MCF 10A (cell line): ENCODE measurements at regions of chr16 and their contacts with region 1.

Region 1: DNA sequence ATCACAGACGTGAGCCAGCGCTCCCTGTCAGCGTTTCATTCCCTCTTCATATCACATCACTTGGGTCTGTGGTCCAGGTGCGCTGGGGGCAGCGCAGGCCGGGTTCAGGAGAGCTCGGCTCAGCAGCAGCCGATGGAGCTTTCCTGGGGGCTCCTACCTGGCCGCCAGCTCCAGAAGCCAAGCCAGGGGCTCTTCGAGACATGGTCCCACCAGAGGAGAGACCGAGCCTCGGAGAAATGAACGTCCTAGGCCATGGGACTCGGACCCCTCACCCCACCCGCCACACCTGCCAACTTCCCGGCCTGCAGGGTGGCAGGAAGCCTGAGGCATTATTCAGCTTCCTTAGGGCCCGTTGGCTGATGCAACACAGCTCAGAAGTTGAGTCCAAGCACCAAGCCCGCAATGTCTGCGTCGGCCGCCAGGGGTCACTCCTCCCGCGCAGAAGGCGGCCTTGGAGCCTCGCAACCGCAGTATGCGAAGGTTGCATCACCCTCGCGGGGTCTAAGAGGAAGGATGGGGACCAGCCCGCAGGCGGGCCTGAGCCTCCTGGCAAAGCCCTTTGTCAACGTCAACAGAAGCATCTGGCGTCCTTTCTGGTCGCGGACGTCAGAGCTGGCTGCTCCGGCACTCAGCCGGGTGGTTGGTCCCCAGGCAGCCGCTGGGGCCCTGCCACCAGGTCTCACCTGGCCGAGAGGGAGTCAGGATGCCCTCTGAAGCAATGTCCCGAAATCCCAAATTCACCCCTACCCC is 13.2 kb upstream of the KLHDC4 start:
- DNase-seq: peak; percentile 97
- H3K4me3 Mint-ChIP-seq: peak overlapping the region; percentile 52
- H3K27ac Mint-ChIP-seq: peak overlapping the region; percentile 89
- H3K4me1 Mint-ChIP-seq: peaks cover 18% of the 10 kb centered on the region
- H3K27me3 Mint-ChIP-seq: no peaks in the 10 kb centered on the region
- CTCF ChIP-seq: peak; percentile 98

Region 2: GRCh38 chr16:87765776-87766484 is 13.1 kb before region 1 on chr16 and contains the start of gene KLHDC4:
- CTCF ChIA-PET with region 1: interaction called, 25 read pairs
- POLR2A ChIA-PET with region 1: interaction called, 13 read pairs
- intact Hi-C with region 1: no loop called
- DNase-seq: peak; percentile 84
- H3K4me3 Mint-ChIP-seq: peak within 1 kb of the TSS; percentile 88
- H3K27ac Mint-ChIP-seq: peak within 1 kb of the TSS; percentile 95
- H3K4me1 Mint-ChIP-seq: peaks cover 24% of the 10 kb centered on the region
- H3K27me3 Mint-ChIP-seq: no peaks in the 10 kb centered on the region
- CTCF ChIP-seq: no peak
- total RNA-seq, gene KLHDC4: 82.9 and 106 TPM in 2 replicates

Region 3: DNA sequence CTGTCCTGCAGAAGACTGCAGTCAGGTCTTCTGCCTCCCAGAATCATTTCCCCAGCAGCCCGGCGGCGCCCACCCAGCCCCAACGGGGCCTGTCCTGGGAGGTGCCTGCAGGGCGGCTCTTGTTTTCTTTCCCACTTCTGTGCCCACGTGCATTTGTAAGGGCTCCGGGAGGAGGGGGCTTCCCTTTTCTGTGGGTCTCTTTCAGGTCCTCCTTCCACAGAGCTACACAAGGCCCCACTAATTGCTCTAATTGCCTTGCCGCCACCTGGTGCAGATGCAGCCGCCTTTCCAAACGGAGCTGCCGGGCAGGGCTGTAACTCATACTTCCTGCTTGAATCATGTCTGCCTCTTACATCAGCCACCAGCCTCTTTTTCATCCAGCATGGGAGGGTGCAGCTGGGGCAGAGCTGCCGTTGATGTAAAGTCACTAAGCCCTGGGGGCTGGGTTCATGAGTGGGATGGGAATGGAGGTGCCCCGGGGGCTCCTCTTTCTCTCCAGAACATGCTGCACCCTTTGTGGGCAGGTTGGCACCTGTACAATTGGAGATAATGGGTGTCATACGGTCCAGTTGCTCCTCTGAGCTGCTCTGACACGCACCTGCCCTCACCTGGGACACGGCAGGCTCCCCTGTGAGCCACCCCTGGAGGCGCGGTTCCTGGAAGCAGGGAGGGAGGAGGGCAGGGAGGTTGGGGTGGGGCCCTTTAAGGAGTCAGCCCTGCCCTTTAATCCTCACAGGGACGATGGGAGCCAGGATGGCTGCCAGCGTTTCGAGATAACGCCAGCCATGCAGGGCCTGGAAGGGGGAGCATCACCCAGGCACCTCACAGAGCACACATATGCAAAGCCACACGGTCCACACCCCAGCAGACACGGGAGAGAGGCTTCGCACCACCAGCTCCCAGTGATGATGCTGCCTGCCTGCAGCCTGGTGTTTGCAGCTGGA is 27.9 kb after region 1 on chr16:
- CTCF ChIA-PET with region 1: interaction called, 50 read pairs
- POLR2A ChIA-PET with region 1: interaction called, 79 read pairs
- intact Hi-C with region 1: loop called (anchors 1 kb)
- DNase-seq: peak; percentile 99
- H3K4me3 Mint-ChIP-seq: peak overlapping the region; percentile 87
- H3K27ac Mint-ChIP-seq: peak overlapping the region; percentile 96
- H3K4me1 Mint-ChIP-seq: peaks cover 37% of the 10 kb centered on the region
- H3K27me3 Mint-ChIP-seq: no peaks in the 10 kb centered on the region
- CTCF ChIP-seq: no peak

Region 4: DNA sequence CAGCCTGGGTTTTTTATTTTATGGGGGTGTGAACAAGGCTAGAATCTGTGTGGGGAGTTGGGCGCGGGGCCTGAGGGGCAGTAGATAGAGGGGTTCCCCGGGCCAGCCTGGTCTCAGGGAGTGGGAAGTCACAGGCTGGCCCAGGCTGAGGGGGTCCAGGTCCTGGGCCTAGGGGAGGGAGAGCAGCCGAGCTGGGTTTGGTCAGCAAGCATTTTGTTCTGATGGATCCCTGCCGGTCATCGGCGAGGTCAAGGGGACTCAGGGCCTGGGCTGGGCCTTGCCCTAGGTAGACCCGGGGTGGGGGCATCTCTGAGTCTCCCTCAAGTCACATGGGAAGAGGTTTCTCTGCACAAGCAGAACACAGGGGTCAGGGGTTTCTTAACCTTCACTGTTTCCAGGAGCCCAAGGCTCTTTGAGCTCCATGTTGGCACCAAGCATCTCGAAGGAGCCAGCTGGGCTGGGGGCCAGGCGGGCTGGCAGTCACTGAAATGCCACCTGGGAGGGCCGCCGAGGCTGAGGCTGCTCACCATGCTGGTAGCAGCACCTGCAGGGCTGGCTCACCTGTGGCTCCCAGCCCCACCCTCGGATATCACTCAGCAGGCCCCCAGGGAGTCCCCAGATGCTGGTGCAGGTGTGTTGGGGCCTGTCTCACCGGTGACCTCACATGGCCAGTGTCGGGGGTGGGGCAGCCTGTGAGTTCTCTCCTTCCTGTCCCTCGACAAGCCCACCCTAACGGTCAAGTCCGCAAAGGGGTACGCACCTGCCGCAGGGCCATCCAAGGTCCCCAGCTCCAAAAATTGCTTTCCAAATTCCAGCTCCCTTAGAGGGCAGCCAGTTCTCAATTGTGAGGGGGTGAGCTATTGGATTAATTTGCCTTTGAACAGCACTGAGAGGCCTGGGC is 49.3 kb after region 1 on chr16:
- CTCF ChIA-PET with region 1: interaction called, 16 read pairs
- POLR2A ChIA-PET with region 1: interaction called, 15 read pairs
- intact Hi-C with region 1: loop called (anchors 5 kb)
- DNase-seq: peak; percentile 61
- H3K4me3 Mint-ChIP-seq: no peak overlapping the region
- H3K27ac Mint-ChIP-seq: no peak overlapping the region
- H3K4me1 Mint-ChIP-seq: peaks cover 8% of the 10 kb centered on the region
- H3K27me3 Mint-ChIP-seq: no peaks in the 10 kb centered on the region
- CTCF ChIP-seq: no peak

Region 5: DNA sequence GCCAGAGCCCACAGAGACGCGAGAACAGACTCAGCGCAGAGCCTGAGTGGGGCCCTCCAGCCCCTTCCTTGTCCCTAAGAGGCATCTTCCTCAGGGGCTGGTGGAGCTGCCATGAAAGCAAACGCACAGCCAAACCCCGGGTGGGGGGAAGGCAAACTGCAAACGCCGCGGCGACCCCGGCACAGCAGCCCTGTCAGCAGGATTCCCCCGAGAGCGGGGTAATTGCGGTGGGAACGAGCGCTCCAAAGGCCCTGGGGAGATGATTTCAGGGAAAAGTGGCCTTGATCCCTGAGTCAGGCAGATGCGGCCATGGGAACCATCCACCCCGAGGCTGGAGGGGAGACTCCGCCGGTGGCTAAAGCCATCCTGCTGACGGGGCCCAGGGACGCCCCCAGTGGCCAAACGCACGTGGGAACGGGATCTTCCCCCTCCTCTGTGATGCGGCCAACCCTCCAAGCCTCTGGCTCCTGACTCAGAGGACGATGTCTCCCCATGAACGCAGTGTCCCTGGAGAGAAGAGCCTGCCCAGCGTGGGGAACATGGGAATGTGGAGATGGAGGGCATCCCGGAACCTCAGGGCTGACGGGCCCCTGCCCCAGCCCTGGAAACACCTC is 65.2 kb after region 1 on chr16:
- CTCF ChIA-PET with region 1: interaction called, 27 read pairs
- POLR2A ChIA-PET with region 1: interaction called, 6 read pairs
- intact Hi-C with region 1: no loop called
- DNase-seq: no peak
- H3K4me3 Mint-ChIP-seq: no peak overlapping the region
- H3K27ac Mint-ChIP-seq: peak overlapping the region; percentile 57
- H3K4me1 Mint-ChIP-seq: peaks cover 14% of the 10 kb centered on the region
- H3K27me3 Mint-ChIP-seq: no peaks in the 10 kb centered on the region
- CTCF ChIP-seq: no peak

Region 6: DNA sequence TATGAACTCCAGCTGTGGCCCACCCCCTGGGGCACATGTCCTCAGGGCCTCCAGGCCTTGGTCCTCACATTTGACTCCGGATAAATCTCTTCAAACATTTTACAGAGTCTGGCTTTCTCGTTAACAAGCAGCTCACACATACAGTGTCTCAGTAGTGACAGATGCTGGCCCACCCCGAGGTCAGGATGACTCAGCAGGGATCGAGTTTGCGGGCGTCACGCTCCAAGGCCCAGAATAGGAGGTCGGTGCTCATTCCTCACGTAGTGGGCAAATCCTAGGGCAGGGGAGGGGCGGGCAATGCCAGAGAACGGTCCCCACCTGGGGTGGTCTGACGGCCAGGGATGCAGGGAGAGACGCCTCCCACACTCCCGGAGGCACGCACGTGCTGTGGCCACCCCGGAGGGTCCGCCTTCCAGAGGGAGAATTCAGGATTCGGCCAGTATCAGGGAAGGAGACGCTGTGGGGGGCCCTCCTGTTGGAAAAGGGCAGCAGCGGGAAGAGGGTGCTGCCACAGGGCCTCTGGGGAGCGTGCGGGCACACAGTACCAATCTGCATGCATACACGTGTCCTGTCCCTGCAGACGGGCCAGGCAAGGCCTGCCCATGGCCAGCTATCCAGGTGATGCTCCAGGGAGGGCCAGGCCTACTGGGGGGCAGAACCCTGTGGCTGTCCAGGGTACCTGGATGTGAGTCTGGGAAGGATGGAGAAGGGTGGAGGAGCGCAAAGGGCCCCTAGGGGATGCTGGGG is 81.7 kb after region 1 on chr16:
- CTCF ChIA-PET with region 1: interaction called, 205 read pairs
- POLR2A ChIA-PET with region 1: interaction called, 138 read pairs
- intact Hi-C with region 1: no loop called
- DNase-seq: peak; percentile 72
- H3K4me3 Mint-ChIP-seq: peak overlapping the region; percentile 67
- H3K27ac Mint-ChIP-seq: peak overlapping the region; percentile 75
- H3K4me1 Mint-ChIP-seq: peaks cover 38% of the 10 kb centered on the region
- H3K27me3 Mint-ChIP-seq: no peaks in the 10 kb centered on the region
- CTCF ChIP-seq: no peak

Region 7: DNA sequence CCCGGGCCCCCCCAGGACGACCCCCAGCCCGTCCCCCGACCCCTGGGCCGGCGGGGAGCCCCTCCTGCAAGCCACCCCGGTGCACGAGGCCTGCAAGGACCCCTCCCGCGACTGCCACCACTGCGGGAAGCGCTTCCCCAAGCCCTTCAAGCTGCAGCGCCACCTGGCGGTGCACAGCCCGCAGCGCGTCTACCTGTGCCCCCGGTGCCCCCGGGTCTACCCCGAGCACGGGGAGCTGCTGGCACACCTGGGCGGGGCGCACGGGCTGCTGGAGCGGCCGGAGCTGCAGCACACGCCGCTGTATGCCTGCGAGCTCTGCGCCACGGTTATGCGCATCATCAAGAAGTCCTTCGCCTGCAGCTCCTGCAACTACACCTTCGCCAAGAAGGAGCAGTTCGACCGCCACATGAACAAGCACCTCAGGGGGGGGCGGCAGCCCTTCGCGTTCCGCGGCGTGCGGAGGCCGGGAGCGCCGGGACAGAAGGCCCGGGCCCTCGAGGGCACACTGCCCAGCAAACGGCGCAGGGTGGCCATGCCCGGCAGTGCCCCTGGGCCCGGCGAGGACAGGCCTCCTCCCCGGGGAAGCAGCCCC is 658.5 kb after region 1 on chr16:
- CTCF ChIA-PET with region 1: interaction called, 3 read pairs
- POLR2A ChIA-PET with region 1: no interaction called
- intact Hi-C with region 1: loop called (anchors 10 kb)
- DNase-seq: peak; percentile 42
- H3K4me3 Mint-ChIP-seq: no peak overlapping the region
- H3K27ac Mint-ChIP-seq: no peak overlapping the region
- H3K4me1 Mint-ChIP-seq: no peaks in the 10 kb centered on the region
- H3K27me3 Mint-ChIP-seq: peaks cover 11% of the 10 kb centered on the region
- CTCF ChIP-seq: peak; percentile 93